CD4-positive, alpha-beta memory T cell (primary cell): ENCODE measurements at regions of chr16 and their contacts with region 1.

Region 1: DNA sequence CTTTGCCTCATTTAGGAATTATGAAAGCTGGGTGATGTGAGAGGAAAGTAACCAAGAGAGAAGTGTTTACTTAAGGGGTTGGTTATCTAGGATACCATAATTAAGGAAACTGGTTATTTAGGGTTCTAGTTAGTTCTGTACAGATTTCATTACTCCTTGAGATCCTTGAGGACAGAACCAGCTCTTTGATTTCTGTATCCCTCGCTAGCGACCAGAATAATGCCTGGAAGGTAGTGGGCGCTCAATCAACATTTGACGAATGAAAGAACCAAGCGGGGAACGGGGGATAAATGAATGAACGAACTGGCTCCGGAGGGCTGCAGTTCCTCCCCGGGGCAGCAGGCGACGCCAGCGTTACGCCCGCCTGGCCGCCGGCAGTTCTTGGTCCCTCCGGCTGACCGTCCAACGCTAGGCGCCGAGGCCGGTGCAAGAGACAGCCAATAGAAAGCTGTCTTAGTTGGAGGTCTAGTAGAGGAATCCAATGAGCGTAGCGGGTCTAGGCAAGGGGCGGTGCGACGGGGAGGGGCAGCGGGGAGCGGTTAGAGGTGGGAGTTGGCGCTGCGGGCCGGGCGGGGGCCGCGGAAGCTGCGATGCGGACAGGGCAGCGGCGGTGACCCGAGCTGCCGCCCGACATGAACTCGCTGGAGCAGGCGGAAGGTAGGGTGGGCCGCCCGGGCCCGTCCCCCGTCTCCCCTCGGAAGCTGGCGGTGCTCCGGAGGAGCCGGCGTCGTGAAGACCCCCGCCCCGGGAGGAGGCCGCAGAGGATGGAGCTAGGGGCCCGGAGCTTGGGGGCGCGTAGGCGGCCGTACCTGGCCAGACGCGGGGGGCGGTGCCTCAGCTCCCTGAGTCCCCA is at the start of gene CNEP1R1:
- DNase-seq: peak; percentile 93 to 97 (median 95)
- H3K4me3 ChIP-seq: peak within 1 kb of the TSS; percentile 76 to 85
- H3K4me3 Mint-ChIP-seq: peak within 1 kb of the TSS; percentile 94 to 99 (median 96)
- H3K27ac ChIP-seq: peak within 1 kb of the TSS; percentile 75
- H3K27ac Mint-ChIP-seq: peak within 1 kb of the TSS; percentile 91 to 99 (median 96)
- H3K4me1 ChIP-seq: peaks cover 34% of the 10 kb centered on the region
- H3K4me1 Mint-ChIP-seq: peaks cover 18 to 32% (median 24%) of the 10 kb centered on the region in 4 donors
- H3K27me3 ChIP-seq: no peaks in the 10 kb centered on the region
- H3K27me3 Mint-ChIP-seq: peaks cover 0 to 4% of the 10 kb centered on the region in 2 donors
- total RNA-seq, gene CNEP1R1: 34.2 to 40.8 TPM

Region 2: DNA sequence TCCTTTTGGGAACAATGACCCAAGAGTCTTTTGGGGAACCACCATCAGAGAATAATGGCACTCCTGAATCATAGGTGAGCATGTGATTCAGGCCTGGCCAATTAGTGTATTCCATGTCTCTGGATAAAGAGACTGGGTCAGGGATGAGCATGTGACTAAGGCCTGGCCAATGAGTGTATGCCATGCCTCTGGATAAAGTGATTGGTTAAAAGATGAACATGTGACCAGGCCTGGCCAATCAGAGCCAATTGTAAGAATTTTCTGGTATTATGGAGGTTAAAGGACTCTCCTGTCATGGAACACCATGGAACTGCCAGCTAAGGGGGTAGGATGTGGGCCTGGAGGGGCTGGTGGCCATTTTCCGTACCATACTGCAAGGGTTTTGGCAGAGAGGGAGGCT is 457.0 kb before region 1 on chr16:
- CTCF ChIA-PET with region 1: no interaction called
- POLR2A ChIA-PET with region 1: no interaction called
- intact Hi-C with region 1: no loop called
- DNase-seq: no peak
- H3K4me3 ChIP-seq: no peak overlapping the region
- H3K4me3 Mint-ChIP-seq: no peak overlapping the region
- H3K27ac ChIP-seq: no peak overlapping the region
- H3K27ac Mint-ChIP-seq: no peak overlapping the region
- H3K4me1 ChIP-seq: no peaks in the 10 kb centered on the region
- H3K4me1 Mint-ChIP-seq: no peaks in the 10 kb centered on the region
- H3K27me3 ChIP-seq: no peaks in the 10 kb centered on the region
- H3K27me3 Mint-ChIP-seq: no peaks in the 10 kb centered on the region

Region 3: DNA sequence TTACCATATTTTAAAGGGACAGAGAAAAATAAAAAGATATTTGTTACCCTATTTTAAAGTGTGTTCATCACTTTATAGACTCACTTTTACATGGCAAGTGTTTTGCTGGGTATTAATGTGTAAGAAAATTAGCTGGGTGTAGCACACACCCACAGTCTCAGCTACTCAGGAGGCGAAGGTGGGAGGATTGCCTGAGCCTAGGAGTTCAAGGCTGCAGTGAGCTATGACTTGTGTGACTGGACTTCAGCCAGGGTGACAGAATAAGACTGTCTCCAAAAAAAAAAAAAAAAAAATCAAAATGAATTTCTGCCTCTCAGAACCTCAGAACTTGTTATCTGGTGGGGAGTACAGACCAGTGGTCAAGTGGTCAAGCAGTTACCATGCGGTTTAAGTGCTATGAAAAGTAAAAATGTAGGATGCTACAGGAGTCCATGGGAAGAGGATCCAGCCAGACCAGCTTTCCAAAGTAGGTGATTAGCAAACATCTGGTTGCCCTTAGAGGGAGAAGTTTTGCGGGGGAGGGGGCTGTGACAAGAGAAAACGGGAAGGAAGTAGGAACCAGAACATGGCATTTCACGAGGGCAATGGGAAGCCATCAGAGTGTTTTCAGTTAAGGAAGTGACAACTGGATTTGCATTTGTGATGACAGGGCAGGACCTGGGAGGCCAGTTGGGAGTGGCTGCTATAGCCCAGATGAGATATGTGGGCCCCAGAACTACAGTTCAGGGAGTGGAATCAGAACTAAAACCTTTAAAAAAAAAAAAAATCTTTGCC is 14.0 kb after region 1 on chr16:
- CTCF ChIA-PET with region 1: interaction called, 16 read pairs
- POLR2A ChIA-PET with region 1: interaction called, 6 read pairs
- intact Hi-C with region 1: no loop called
- DNase-seq: no peak
- H3K4me3 ChIP-seq: no peak overlapping the region
- H3K4me3 Mint-ChIP-seq: no peak overlapping the region
- H3K27ac ChIP-seq: no peak overlapping the region
- H3K27ac Mint-ChIP-seq: peak overlapping the region in 1 of 7 donors; percentile 18
- H3K4me1 ChIP-seq: no peaks in the 10 kb centered on the region
- H3K4me1 Mint-ChIP-seq: peaks cover 0 to 2% (median 0%) of the 10 kb centered on the region in 4 donors
- H3K27me3 ChIP-seq: no peaks in the 10 kb centered on the region
- H3K27me3 Mint-ChIP-seq: peaks cover 2 to 7% of the 10 kb centered on the region in 2 donors

Region 4: DNA sequence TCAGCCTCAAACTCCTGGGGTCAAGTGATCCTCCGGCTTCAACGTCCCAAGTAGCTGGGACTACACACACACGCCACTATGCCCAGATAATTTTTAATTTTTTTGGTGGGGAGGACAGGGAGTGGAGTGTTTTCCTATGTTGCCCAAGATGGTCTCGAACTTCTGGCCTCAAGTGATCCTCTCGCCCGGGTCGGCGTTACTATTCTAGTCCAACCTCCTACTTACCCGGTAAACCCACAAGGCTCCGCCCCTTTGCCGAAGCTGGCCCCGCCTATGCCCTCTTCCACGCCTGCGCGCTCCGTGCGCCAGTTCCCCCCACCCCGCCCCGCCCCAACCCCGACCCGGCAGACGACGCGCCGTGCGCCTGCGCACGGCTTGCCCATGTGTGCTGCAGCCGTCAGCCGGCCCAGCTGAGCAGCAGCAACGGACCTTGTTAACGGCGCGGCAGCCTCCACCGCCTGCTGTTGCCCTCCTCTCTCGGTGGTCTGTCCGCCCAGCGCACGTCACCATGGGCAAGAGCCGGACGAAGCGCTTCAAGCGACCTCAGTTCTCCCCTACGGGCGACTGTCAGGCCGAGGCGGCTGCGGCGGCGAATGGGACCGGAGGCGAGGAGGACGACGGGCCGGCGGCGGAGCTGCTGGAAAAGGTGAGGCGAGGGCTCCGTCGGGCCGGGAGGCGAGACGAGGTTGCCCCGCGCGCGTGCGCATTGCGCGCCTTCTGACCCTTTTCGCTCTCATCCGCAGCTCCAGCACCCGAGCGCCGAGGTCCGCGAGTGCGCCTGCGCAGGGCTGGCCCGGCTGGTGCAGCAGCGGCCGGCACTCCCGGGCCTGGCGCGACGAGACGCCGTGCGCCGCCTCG is 40.9 kb after region 1 on chr16 and contains the start of gene HEATR3:
- CTCF ChIA-PET with region 1: interaction called, 23 read pairs
- POLR2A ChIA-PET with region 1: interaction called, 32 read pairs
- intact Hi-C with region 1: loop called (anchors 1 kb)
- DNase-seq: peak; percentile 89 to 92 (median 91)
- H3K4me3 ChIP-seq: peak within 1 kb of the TSS; percentile 82 to 98
- H3K4me3 Mint-ChIP-seq: peak within 1 kb of the TSS; percentile 90 to 97 (median 93)
- H3K27ac ChIP-seq: peak within 1 kb of the TSS; percentile 79
- H3K27ac Mint-ChIP-seq: peak within 1 kb of the TSS; percentile 77 to 96 (median 94)
- H3K4me1 ChIP-seq: peaks cover 33% of the 10 kb centered on the region
- H3K4me1 Mint-ChIP-seq: peaks cover 28 to 47% (median 35%) of the 10 kb centered on the region in 4 donors
- H3K27me3 ChIP-seq: no peaks in the 10 kb centered on the region
- H3K27me3 Mint-ChIP-seq: no peaks in the 10 kb centered on the region
- total RNA-seq, gene HEATR3: 20.5 to 25.6 TPM

Region 5: DNA sequence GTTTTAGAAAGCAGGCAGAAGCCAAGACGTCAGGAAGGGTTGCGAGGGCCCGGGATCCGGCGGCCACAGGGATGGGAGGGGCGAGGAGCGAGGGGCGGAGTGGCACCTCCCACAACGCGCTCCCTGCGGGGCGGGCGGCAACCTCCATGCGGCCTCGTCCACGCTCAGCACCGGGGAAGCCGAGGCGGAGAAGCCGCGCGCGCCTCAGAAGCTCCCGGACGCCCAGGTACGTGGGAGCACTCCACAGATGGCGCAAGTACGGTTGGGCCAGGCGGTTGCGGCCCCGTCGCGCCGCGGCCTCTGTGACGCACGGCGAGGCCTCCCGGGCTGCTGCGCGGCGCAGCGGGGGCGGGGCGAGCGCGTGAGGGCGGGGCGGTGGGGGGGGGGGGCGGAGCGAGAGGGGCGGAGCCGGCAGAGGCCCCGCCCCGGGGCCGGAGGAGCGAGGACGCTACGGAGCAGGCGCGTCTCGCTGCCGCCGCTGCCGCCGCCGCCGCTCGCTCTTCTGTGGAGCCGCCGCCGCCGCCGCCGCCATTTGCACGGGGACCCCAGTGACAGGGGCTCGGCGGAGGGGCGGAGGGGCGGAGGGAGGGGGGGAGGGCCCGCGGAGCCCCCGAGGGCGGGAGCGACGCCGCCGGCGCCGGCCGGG is 128.0 kb after region 1 on chr16 and contains the start of gene TENT4B:
- CTCF ChIA-PET with region 1: interaction called, 10 read pairs
- POLR2A ChIA-PET with region 1: interaction called, 12 read pairs
- intact Hi-C with region 1: loop called (anchors 1 kb)
- DNase-seq: peak; percentile 92 to 95 (median 94)
- H3K4me3 ChIP-seq: peak within 1 kb of the TSS; percentile 84 to 93
- H3K4me3 Mint-ChIP-seq: peak within 1 kb of the TSS; percentile 91 to 97 (median 94)
- H3K27ac ChIP-seq: peak within 1 kb of the TSS; percentile 89
- H3K27ac Mint-ChIP-seq: peak within 1 kb of the TSS; percentile 93 to 99 (median 97)
- H3K4me1 ChIP-seq: peaks cover 47% of the 10 kb centered on the region
- H3K4me1 Mint-ChIP-seq: peaks cover 25 to 41% (median 34%) of the 10 kb centered on the region in 4 donors
- H3K27me3 ChIP-seq: no peaks in the 10 kb centered on the region
- H3K27me3 Mint-ChIP-seq: no peaks in the 10 kb centered on the region
- total RNA-seq, gene TENT4B: 22.4 to 23.5 TPM

Region 6: GRCh38 chr16:50195276-50195675 is 170.4 kb after region 1 on chr16:
- CTCF ChIA-PET with region 1: interaction called, 6 read pairs
- POLR2A ChIA-PET with region 1: interaction called, 12 read pairs
- intact Hi-C with region 1: no loop called
- DNase-seq: no peak
- H3K4me3 ChIP-seq: no peak overlapping the region
- H3K4me3 Mint-ChIP-seq: peak overlapping the region in 6 of 8 donors; percentile 1 to 76 (median 21)
- H3K27ac ChIP-seq: no peak overlapping the region
- H3K27ac Mint-ChIP-seq: peak overlapping the region; percentile 15 to 75 (median 30)
- H3K4me1 ChIP-seq: peaks cover 41% of the 10 kb centered on the region
- H3K4me1 Mint-ChIP-seq: peaks cover 42 to 81% (median 65%) of the 10 kb centered on the region in 4 donors
- H3K27me3 ChIP-seq: no peaks in the 10 kb centered on the region
- H3K27me3 Mint-ChIP-seq: no peaks in the 10 kb centered on the region

Region 7: DNA sequence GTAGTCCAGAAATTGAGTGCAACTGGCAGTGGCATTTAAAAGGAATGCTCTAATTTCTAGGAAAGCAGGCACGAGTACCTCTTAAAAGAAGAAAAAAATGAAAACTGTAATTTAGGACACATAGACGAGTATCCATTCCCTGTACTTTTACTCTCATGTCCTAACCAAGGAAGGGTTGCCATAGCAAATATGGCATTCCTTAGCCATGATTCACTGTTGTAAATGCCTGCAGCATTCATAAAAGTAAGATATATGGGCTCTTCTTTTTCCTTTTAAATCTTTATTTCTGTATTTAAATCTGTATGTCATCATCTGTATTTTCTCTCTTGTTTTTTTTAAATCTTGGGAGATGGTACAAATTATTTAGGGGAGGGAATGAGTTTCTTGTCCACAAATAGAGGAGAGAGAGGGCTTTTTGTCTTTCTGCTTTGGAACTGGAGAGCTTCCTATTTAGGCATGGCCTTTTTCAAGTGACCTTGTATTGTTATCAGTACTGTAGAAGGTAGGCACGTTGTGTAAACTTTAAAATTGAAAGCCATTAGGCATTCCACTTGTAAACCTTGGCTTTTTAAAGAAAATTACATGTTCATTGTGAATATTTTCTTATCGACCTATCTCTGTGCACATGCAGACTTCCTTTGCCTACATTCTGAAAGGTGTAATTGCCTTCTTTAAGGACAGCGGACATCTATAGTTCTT is 178.2 kb after region 1 on chr16:
- CTCF ChIA-PET with region 1: interaction called, 121 read pairs
- POLR2A ChIA-PET with region 1: interaction called, 3 read pairs
- intact Hi-C with region 1: no loop called
- DNase-seq: no peak
- H3K4me3 ChIP-seq: no peak overlapping the region
- H3K4me3 Mint-ChIP-seq: peak overlapping the region in 2 of 8 donors; percentile 27 to 41
- H3K27ac ChIP-seq: no peak overlapping the region
- H3K27ac Mint-ChIP-seq: peak overlapping the region; percentile 5 to 89 (median 71)
- H3K4me1 ChIP-seq: peaks cover 27% of the 10 kb centered on the region
- H3K4me1 Mint-ChIP-seq: peaks cover 32 to 64% (median 55%) of the 10 kb centered on the region in 4 donors
- H3K27me3 ChIP-seq: no peaks in the 10 kb centered on the region
- H3K27me3 Mint-ChIP-seq: no peaks in the 10 kb centered on the region

Region 8: DNA sequence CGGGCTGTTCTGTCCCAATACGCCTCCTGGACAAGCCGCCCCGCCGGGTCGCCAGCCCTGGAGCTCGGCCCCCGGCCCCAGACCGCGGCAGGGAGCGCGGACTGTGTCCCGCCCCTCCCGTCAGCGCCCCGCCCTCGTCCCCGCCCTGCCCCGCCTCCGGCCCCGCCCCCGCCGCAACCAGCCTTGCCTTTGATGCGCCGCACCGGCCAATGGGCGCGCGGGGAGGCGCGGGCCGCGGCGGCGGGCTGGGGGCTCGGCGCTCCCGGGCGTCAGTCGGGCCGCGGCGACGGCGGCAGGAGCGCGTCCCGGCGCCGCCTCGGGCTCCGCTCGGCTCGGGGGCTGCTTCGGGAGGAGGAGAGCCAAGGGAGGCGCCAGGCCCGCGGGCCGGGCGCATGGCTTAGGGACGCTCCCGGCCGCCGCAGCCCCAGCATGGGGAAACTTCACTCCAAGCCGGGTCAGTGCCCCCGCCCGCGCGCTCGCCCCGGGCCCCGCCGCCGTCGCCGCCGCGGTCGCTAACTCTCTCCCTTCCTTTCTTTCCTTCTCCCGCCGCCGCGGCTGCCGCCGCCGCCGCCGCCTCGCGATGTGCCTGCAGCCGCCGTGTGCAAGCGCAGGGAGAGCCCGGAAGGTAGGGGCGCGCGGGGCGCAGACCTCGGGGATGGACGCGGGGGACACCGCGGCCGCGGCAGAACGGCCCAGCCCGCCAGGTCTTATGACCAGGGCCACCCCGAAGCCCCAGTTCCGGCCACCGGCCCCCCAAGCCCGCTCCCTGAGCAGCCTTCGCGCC is 523.4 kb after region 1 on chr16 and contains the start of gene NKD1:
- CTCF ChIA-PET with region 1: no interaction called
- POLR2A ChIA-PET with region 1: no interaction called
- intact Hi-C with region 1: loop called (anchors 5 kb)
- DNase-seq: peak; percentile 64 to 78 (median 69)
- H3K4me3 ChIP-seq: peak within 1 kb of the TSS in 1 of 2 donors; percentile 68
- H3K4me3 Mint-ChIP-seq: peak within 1 kb of the TSS; percentile 81 to 89 (median 88)
- H3K27ac ChIP-seq: peak within 1 kb of the TSS; percentile 43
- H3K27ac Mint-ChIP-seq: peak within 1 kb of the TSS; percentile 90 to 96 (median 95)
- H3K4me1 ChIP-seq: peaks cover 30% of the 10 kb centered on the region
- H3K4me1 Mint-ChIP-seq: peaks cover 14 to 35% (median 25%) of the 10 kb centered on the region in 4 donors
- H3K27me3 ChIP-seq: no peaks in the 10 kb centered on the region
- H3K27me3 Mint-ChIP-seq: no peaks in the 10 kb centered on the region
- total RNA-seq, gene NKD1: 3.8 to 4.6 TPM